Posterior vena cava (tissue), 2 donors: ENCODE measurements at regions of chr21 and their contacts with region 1.

Region 1: DNA sequence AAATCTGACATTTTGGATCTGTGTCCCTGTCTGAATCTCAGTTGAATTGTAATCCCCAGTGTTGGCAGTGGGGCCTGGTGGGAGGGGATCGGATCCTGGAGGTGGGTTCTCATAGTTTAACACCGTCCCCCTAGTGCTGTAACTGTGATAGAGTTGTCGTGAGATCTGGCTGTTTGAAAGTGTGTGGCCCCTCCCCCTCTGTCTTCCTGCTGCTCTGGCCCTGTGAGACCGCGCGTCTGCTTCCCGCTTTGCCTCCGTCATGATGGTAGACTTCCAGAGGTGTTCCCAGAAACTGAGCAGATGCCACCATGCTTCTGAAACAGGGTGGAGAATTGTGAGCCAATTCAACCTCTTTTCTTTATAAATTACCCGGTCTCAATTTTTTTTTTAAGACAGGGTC is 25.0 kb downstream of the AGPAT3 start:
- DNase-seq: peak; percentile 60

Region 2: GRCh38 chr21:43902441-43902840 is 12.4 kb after region 1 on chr21:
- intact Hi-C with region 1: no loop called
- DNase-seq: peak; percentile 54

Region 3: DNA sequence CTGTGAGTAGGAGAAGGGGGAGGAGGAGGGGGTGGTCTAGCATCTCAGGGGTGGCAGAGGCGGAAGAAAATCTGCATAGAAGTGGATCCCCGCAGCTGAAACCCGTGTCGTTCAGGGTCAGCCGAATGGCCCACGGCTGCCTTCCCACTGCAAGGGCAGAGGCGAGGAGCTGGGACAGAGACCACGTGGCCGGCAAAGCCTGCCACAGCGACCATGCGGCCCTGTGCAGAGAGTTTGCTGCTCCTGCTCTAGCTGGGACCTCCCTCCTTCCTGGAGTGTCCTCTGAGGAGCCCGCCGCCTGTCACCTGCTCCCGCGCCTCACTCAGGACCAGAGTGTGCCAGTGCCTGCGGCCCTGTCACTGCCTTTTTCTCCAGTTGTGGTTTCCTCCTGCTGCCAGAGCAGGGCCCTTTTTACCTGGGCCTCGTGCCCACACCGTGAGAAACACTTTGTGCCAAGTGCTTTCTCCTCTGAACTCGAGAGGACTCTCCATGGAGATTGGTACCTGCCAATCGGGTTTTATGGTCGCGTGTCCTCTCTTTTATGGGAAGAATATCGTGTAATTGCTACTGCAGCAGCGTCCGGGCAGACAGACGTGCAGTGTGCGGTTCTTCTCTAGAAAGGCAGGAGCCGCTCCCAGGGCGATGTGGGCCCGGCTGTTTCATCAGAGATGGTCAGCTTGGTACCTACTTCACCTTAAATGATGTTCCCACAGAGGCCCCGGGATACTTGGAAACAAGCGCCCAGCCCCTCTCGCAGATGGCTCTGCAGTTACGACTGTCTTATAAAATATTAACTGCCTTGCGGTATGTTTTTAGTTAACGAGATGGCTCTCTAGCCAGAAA is 458.1 kb after region 1 on chr21:
- intact Hi-C with region 1: loop called in 1 of 2 experiments (anchors 2 kb)
- DNase-seq: no peak